Ascending aorta (tissue), 2 donors: ENCODE measurements at regions of chr19 and their contacts with region 1.

Region 1: GRCh38 chr19:2578901-2579677 is 103.2 kb downstream of the GADD45B start:
- DNase-seq: peak; percentile 75 to 96
- H3K4me3 ChIP-seq: peak overlapping the region; percentile 50 to 60
- H3K27ac ChIP-seq: peak overlapping the region; percentile 84 to 90
- H3K4me1 ChIP-seq: peaks cover 13 to 40% of the 10 kb centered on the region in 2 donors
- H3K27me3 ChIP-seq: no peaks in the 10 kb centered on the region
- CTCF ChIP-seq: peak; percentile 89 to 98 (median 97)

Region 2: GRCh38 chr19:2494444-2495129 is 84.5 kb before region 1 on chr19:
- intact Hi-C with region 1: loop called (anchors 1 kb)
- DNase-seq: peak; percentile 69 to 95
- H3K4me3 ChIP-seq: peak overlapping the region; percentile 45 to 68
- H3K27ac ChIP-seq: peak overlapping the region; percentile 84 to 94
- H3K4me1 ChIP-seq: peaks cover 7 to 19% of the 10 kb centered on the region in 2 donors
- H3K27me3 ChIP-seq: no peaks in the 10 kb centered on the region
- CTCF ChIP-seq: no peak

Region 3: DNA sequence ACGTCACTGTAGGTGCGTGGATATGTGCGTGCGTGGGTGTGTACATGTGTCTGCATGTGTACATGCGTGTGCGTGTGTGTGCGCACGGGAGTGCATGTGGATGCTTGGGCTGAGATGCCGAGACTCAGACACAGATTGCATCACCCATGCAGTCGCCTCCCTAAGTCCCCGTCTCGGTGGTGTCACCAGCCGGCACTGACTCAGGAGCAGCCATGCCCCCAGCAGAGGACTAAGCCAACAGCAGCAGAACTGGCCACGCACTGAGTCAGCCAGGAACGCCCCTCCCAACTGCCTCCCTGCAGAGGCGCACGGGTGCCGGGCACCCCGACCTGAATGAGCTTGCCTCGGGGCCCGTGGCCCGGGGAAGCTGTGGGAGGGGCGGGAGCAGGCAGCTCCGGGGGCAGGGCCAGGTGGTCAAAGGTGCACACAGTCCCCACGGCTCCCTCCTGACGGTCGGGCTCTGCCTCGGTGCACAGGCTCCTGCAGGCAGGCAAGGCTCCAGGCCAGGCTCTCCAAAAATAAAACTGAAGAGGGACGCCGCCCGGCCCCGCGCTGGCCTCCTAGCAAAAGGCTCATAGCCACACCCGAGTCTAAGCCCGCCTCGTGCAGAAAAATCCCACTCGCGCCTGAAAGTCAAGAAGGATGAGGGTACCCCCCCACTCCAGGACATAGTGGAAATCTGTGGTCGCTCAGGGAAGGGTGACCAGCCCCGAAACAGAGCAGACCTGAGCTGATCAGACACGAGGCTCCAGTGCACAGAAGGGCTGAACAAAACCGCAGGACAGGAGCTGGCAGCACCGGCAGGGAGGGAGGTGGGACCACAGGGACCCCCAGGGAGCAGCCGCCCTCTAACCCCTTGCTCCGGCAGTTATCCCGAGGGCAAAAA is 54.0 kb before region 1 on chr19:
- intact Hi-C with region 1: loop called (anchors 2 kb)
- DNase-seq: peak; percentile 65 to 86
- H3K4me3 ChIP-seq: peak overlapping the region; percentile 28 to 55
- H3K27ac ChIP-seq: peak overlapping the region; percentile 63 to 76
- H3K4me1 ChIP-seq: peaks cover 7 to 21% of the 10 kb centered on the region in 2 donors
- H3K27me3 ChIP-seq: no peaks in the 10 kb centered on the region
- CTCF ChIP-seq: no peak

Region 4: DNA sequence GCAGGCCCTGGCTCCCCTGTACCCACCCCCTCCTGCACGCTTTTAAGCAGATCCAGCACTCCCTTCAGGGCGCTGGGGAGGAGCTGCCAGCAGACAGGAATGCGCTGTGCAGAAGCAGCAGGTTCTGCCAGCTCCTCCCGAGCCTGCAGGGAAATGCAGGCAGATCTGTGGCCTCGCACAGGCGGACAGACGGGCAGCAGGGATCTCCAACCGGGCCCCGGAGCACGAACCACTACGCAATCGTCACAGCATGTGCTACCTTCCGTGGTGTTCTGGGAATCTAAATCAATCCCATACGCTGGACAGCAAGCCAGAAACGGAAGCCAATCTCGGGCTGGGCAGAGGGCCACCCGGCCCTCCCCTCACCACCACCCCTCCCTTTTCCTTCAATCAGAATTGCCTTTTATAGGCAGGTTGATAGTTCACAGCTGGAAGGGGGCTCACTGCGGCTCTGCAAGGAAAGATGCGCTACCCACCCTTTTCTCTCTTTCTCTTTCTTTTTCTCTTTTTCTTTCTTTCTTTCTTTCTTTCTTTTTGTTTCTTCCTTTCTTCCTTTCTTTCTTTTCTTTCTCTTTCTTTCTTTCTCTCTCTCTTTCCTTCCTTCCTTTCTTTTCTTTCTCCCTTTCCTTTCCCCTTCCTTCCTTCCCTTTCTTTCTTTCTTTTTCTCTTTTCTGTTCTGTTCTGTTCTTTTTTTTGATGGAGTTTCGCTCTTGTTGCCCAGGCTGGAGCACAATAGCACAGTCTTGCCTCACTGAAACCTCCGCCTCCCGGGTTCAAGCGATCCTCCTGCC is 23.5 kb after region 1 on chr19:
- intact Hi-C with region 1: loop called (anchors 1 kb)
- DNase-seq: peak; percentile 81 to 96
- H3K4me3 ChIP-seq: peak overlapping the region; percentile 38 to 55
- H3K27ac ChIP-seq: peak overlapping the region; percentile 92 to 97
- H3K4me1 ChIP-seq: peaks cover 17 to 23% of the 10 kb centered on the region in 2 donors
- H3K27me3 ChIP-seq: no peaks in the 10 kb centered on the region
- CTCF ChIP-seq: no peak

Region 5: DNA sequence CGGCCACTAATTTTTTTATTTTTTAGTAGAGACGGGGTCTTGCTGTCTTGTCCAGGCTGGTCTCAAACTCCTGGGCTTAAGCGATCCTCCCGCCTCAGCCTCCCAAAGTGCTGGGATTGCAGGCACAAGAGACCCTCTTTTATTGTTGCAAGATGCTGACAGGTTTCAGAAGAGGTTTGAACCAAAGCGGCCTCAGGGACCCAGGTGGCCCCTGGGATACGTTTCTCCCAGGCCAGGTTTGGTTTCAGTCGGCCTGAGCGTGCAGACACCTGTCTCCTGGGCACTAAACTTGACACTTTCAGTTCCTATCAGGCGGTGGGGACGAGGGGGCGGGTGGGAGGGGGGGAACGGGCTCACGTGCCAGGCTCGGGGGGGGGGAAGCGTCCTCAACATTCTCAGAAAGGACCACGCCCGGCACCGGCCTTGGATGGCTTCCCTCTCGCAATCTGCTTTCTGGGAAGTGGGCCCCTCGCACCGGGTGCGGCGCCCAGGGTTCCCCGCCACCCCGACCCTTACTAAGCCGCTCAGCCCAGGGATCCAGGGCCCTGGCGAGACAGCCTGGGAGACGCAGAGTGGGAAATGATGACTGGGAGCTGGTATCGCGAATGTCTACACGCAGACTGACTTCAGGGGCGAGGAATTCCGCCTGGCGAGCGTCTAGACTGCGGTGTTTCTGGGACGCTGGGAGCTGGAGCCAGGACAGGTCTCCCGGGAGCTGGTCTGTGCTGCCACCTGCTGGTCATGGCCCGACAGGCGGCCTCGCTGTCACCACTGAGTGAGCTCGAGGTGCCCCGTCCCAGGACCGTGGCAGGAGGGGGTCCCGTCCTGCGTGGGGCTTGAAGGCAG is 31.8 kb after region 1 on chr19:
- intact Hi-C with region 1: loop called (anchors 1 kb)
- DNase-seq: peak; percentile 80 to 97
- H3K4me3 ChIP-seq: peak overlapping the region; percentile 51 to 61
- H3K27ac ChIP-seq: peak overlapping the region; percentile 92 to 94
- H3K4me1 ChIP-seq: peaks cover 0 to 9% of the 10 kb centered on the region in 2 donors
- H3K27me3 ChIP-seq: no peaks in the 10 kb centered on the region
- CTCF ChIP-seq: peak; percentile 93 to 99 (median 94)

Region 6: DNA sequence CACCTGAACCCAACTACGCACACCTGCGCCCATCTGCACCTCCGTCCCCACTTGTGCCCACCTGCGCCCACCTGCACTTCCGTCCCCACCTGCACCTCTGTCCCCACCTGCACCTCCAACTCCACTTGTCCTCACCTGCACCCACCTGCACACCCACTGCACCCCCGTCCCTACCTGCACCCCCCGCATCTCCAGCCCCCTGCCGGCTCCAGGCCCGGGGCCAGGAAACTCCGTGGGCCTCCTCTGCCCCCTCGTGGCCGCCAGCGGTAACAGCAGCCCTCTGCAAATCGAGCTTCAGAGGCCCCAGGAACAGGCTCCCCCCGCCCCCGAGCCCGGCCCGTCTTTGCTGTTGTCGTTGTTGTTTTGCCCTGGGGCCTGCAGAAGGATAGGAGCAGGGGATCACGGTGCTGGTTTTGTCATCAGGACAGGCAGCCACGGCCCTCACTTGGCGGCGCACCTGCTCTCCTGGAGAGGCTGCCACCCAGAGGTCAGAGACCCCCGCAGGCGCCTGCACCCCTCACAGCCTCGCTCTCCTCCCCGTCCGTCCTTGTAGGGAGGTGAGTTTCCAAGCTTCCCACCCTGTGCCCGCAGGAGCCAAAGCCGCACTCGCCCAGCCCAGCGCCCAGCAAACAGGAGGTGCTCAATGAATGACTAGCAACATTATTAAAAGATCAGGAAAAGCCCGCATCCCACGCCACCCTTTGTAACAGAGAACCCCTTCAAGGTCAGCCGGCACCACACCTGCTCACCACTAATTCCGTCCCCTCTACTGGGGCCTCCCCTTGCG is 58.0 kb after region 1 on chr19:
- intact Hi-C with region 1: loop called (anchors 2 kb)
- DNase-seq: no peak
- H3K4me3 ChIP-seq: peak overlapping the region in 1 of 2 donors; percentile 32
- H3K27ac ChIP-seq: no peak overlapping the region
- H3K4me1 ChIP-seq: peaks cover 15 to 23% of the 10 kb centered on the region in 2 donors
- H3K27me3 ChIP-seq: no peaks in the 10 kb centered on the region
- CTCF ChIP-seq: peak; percentile 87 to 98 (median 94)

Region 7: GRCh38 chr19:2663920-2664571 is 85.0 kb after region 1 on chr19:
- intact Hi-C with region 1: no loop called
- DNase-seq: no peak
- H3K4me3 ChIP-seq: no peak overlapping the region
- H3K27ac ChIP-seq: no peak overlapping the region
- H3K4me1 ChIP-seq: no peaks in the 10 kb centered on the region
- H3K27me3 ChIP-seq: no peaks in the 10 kb centered on the region
- CTCF ChIP-seq: no peak